ENCODE measurements at regions of chr4 and their contacts with region 1.

Region 1: GRCh38 chr4:147793569-147794313 is 61.9 kb downstream of the ARHGAP10 start:
- DNase-seq: no peak
- H3K4me3 Mint-ChIP-seq: peak overlapping the region; percentile 39
- H3K27ac Mint-ChIP-seq: peak overlapping the region; percentile 89
- H3K4me1 Mint-ChIP-seq: peaks cover 24% of the 10 kb centered on the region
- H3K27me3 Mint-ChIP-seq: no peaks in the 10 kb centered on the region
- CTCF ChIP-seq: no peak

Region 2: DNA sequence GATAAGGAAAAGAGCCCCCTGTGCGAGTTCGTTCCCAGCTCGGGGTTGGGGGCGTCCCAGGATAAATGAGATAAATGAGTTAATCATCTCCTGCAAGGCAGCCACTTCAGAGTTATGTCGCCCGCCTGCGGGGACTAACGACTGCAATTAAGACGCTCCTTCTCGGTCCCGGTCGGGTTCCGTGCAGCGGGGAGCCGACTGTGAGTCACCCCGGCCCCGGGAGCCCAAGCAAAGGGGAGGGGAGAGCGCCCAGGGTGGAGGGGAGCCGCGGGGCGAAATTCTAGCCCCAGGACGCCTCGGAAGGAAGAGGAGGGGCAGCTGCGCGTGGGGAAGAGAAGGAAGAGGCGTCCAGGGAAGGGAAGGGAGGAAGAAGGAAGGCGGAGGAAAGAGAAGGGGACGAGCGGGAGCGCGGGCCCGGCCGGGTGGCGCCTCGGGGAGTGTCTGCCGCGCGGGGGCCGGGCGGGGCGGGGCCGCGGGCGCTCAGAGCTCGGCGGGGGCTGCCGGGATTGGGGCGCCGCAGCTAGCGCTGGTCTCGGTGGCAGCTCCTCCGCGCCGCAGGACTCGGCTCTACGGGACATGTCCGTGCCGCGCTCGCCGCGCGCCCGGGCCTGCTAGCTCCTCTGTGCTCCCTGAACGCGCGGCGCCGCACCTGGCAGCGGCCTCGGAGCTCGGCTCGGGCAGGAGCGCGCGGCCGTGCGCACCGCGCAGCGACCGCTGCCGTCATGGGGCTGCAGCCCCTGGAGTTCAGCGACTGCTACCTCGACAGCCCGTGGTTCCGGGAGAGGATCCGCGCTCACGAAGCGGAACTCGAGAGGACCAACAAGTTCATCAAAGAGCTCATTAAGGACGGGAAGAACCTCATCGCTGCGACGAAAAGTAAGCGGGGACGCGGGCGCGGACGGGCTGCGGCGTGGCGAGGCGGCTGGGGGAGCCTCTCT is 61.9 kb before region 1 on chr4 and contains the start of gene ARHGAP10:
- CTCF ChIA-PET with region 1: no interaction called
- intact Hi-C with region 1: loop called (anchors 5 kb)
- DNase-seq: peak; percentile 57
- H3K4me3 Mint-ChIP-seq: peak within 1 kb of the TSS; percentile 74
- H3K27ac Mint-ChIP-seq: peak within 1 kb of the TSS; percentile 68
- H3K4me1 Mint-ChIP-seq: peaks cover 32% of the 10 kb centered on the region
- H3K27me3 Mint-ChIP-seq: no peaks in the 10 kb centered on the region
- CTCF ChIP-seq: no peak
- total RNA-seq, gene ARHGAP10: 5.4 and 6.1 TPM in 2 replicates

Region 3: DNA sequence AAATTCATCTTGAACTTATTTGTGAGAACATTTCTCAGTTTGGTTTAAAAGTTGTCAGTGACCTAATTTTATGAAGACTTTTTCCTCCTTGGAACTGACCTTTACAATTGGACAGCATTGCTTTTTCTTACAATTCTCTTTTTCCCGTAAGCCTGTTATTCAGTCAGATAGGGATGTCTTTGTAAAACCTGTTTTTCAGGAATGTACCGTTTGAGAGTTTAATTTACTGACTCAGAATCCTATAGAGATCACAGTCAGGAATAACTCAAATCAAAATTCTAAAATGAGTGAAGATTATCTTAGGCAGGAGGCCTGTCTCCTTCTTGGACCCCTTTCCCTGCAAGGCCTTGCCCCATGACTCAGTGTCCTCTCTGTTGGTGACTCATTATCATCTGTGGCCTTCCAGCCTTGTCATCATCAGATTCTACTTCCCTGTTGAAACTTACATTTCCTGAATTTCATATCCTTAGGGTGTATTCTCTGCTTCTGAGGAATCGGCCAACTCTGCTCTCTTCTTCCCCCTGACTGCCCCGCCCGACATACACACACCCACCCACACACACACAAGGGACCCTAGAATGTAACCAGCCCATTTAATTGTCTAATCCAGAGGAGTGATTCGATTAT is 37.9 kb after region 1 on chr4:
- CTCF ChIA-PET with region 1: interaction called, 3 read pairs
- intact Hi-C with region 1: loop called (anchors 5 kb)
- DNase-seq: peak; percentile 26
- H3K4me3 Mint-ChIP-seq: peak overlapping the region; percentile 37
- H3K27ac Mint-ChIP-seq: peak overlapping the region; percentile 75
- H3K4me1 Mint-ChIP-seq: peaks cover 25% of the 10 kb centered on the region
- H3K27me3 Mint-ChIP-seq: no peaks in the 10 kb centered on the region
- CTCF ChIP-seq: no peak

Measured in Calu3 (cell line).